ENCODE measurements at regions of chr17 and their contacts with region 1.

Region 1: DNA sequence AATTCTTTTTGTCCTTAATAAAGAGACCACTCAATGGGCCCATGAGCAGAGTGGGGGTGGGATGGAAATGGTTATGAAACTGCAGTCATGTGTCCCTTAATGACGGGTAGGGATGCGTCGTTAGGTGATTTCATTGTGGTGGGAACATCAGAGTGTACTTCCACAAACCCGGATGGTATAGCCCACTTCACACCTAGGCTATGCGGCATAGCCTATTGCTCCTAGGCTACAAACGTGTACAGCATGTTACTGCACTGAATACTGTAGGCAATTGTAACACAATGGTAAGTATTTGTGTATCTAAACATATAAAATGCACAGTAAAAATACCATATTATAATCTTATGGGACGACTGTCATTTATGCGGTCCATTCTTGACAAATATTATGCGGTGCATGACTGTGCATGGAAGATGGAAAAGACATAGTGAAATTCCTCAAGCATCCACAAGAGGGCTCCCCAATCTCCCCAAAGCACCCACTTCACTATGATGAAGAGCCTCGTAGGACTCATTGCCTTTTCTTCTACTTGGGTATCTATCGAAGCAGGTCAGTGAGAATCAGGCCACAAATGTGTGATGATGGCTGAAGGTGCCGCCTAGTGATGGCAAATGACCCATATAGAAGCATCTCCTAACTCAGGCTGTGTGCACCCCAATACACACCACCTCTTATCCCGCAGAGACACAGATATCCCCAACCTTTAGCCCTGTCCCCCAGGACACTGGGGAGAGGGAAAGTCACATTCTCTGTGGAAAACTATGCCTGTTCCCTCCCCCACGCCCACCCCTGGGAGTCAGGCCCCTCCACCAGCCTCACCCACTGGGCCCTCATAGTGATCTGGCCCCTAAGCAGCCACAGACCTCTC is 43.5 kb downstream of the TBX21 start:
- DNase-seq: peak; percentile 12
- H3K4me3 Mint-ChIP-seq: no peak overlapping the region
- H3K27ac Mint-ChIP-seq: no peak overlapping the region
- H3K4me1 Mint-ChIP-seq: no peaks in the 10 kb centered on the region
- H3K27me3 Mint-ChIP-seq: peaks cover 52% of the 10 kb centered on the region

Region 2: GRCh38 chr17:46822388-46822921 is 954.1 kb before region 1 on chr17:
- intact Hi-C with region 1: no loop called
- DNase-seq: peak; percentile 11
- H3K4me3 Mint-ChIP-seq: no peak overlapping the region
- H3K27ac Mint-ChIP-seq: no peak overlapping the region
- H3K4me1 Mint-ChIP-seq: no peaks in the 10 kb centered on the region
- H3K27me3 Mint-ChIP-seq: peaks cover 53% of the 10 kb centered on the region

Region 3: GRCh38 chr17:47733047-47733673 is 43.4 kb before region 1 on chr17 and contains the start of gene TBX21:
- intact Hi-C with region 1: loop called (anchors 2 kb)
- DNase-seq: peak; percentile 83
- H3K4me3 Mint-ChIP-seq: peak within 1 kb of the TSS; percentile 100
- H3K27ac Mint-ChIP-seq: peak within 1 kb of the TSS; percentile 96
- H3K4me1 Mint-ChIP-seq: peaks cover 84% of the 10 kb centered on the region
- H3K27me3 Mint-ChIP-seq: no peaks in the 10 kb centered on the region
- total RNA-seq, gene TBX21: 89.8 and 90.8 TPM in 2 replicates

Region 4: GRCh38 chr17:47757386-47757785 is 19.2 kb before region 1 on chr17:
- intact Hi-C with region 1: no loop called
- DNase-seq: no peak
- H3K4me3 Mint-ChIP-seq: no peak overlapping the region
- H3K27ac Mint-ChIP-seq: no peak overlapping the region
- H3K4me1 Mint-ChIP-seq: no peaks in the 10 kb centered on the region
- H3K27me3 Mint-ChIP-seq: peaks cover 30% of the 10 kb centered on the region

Region 5: GRCh38 chr17:47789611-47790561 is 13.3 kb after region 1 on chr17:
- intact Hi-C with region 1: loop called (anchors 1 kb)
- DNase-seq: peak; percentile 44
- H3K4me3 Mint-ChIP-seq: peak overlapping the region; percentile 64
- H3K27ac Mint-ChIP-seq: no peak overlapping the region
- H3K4me1 Mint-ChIP-seq: no peaks in the 10 kb centered on the region
- H3K27me3 Mint-ChIP-seq: peaks cover 70% of the 10 kb centered on the region

Region 6: GRCh38 chr17:47802341-47803022 is 25.9 kb after region 1 on chr17:
- intact Hi-C with region 1: loop called (anchors 1 kb)
- DNase-seq: peak; percentile 33
- H3K4me3 Mint-ChIP-seq: no peak overlapping the region
- H3K27ac Mint-ChIP-seq: no peak overlapping the region
- H3K4me1 Mint-ChIP-seq: peaks cover 6% of the 10 kb centered on the region
- H3K27me3 Mint-ChIP-seq: peaks cover 7% of the 10 kb centered on the region

Region 7: GRCh38 chr17:47821424-47822391 is 45.1 kb after region 1 on chr17 and contains the start of gene OSBPL7:
- intact Hi-C with region 1: loop called (anchors 5 kb)
- DNase-seq: peak; percentile 65
- H3K4me3 Mint-ChIP-seq: peak within 1 kb of the TSS; percentile 94
- H3K27ac Mint-ChIP-seq: peak within 1 kb of the TSS; percentile 83
- H3K4me1 Mint-ChIP-seq: peaks cover 25% of the 10 kb centered on the region
- H3K27me3 Mint-ChIP-seq: no peaks in the 10 kb centered on the region
- total RNA-seq, gene OSBPL7: 18.6 and 21.6 TPM in 2 replicates

Region 8: DNA sequence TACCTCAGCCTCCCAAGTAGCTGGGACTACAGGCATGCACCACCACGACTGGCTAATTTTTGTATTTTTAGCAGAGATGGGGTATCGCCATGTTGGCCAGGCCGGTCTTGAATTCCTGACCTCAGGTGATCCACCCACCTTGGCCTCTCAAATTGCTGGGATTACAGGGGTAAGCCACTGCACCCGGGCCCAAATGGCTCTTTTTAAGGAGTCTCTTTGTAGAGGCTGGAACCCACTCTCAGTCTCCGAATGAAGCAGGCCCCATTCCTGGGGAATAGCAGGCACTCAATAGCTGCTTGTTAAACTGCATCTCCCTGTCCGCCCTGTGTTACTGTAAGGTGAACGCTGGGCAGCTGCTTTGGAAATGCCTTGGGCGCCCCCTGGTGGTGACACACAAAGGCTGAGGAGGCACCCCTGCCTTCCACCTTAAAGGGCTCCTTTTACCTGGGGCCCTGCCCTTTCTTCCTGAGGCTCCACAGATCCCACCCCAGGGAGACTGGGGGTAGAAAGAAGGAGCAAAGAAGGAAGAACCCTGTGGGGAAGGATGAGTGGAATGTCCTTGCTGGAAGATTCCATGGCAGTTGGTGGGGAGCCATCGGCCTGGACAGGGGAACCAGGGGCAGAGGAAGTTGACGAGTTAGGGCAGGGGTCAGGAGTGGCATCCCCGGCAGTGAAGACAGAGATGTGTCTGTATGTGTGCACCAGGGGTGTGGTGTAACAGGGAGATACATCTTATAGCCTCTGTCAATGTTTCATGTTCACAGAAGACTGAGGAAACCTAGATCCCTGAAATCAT is 113.4 kb after region 1 on chr17:
- intact Hi-C with region 1: loop called (anchors 2 kb)
- DNase-seq: peak; percentile 82
- H3K4me3 Mint-ChIP-seq: peak overlapping the region; percentile 57
- H3K27ac Mint-ChIP-seq: peak overlapping the region; percentile 1
- H3K4me1 Mint-ChIP-seq: peaks cover 31% of the 10 kb centered on the region
- H3K27me3 Mint-ChIP-seq: no peaks in the 10 kb centered on the region

Region 9: GRCh38 chr17:48074315-48075081 is 297.9 kb after region 1 on chr17:
- intact Hi-C with region 1: no loop called
- DNase-seq: peak; percentile 59
- H3K4me3 Mint-ChIP-seq: no peak overlapping the region
- H3K27ac Mint-ChIP-seq: no peak overlapping the region
- H3K4me1 Mint-ChIP-seq: no peaks in the 10 kb centered on the region
- H3K27me3 Mint-ChIP-seq: no peaks in the 10 kb centered on the region

Measured in activated T-helper 1 cell treated with anti-CD3 and anti-CD28 coated beads, Interleukin-12 subunit alpha, Interleukin-12 subunit beta, Interleukin-2, Interleukin-4 antibody, amounts not matched to agents 30 ng/mL and 10 ng/mL and 1 ng/mL, durations not matched to agents 14 hours and 24 hours and 36 hours (primary cell).